Endothelial cell of umbilical vein (primary cell): ENCODE measurements at regions of chr6 and their contacts with region 1.

Region 1: DNA sequence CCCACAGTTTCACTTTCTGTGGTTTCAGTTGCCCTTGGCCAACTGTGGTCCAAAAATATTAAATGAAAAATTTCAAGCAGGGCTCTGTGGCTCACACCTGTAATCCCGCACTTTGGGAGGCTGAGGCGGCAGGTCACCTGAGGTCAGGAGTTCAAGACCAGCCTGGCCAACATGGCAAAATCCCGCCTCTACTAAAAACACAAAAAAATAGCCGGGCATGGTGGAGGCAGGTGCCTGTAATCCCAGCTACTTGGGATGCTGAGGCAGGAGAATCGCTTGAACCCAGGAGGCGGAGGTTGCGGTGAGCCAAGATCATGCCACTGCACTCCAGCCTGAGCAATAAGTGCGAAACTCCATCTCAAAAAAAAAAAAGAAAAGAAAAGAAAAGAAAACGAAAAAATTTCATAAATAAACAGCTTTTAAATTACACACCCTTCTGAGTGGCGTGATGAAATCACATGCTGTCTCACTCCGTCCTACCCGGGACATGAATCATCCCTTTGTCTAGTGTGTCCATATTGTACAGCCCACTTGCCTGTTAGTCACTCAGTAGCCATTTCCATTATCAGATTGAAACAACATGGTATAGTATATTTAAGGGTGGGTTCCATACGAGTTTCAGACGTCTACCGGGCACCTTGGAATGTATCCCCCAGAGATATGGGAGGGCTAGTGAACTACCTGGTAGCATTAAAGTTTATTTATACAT is 11.7 kb downstream of the PTPRK start:
- DNase-seq: peak; percentile 92
- H3K4me3 ChIP-seq: peak overlapping the region in 1 of 3 experiments; percentile 39
- H3K27ac ChIP-seq: peak overlapping the region; percentile 97
- H3K4me1 ChIP-seq: peaks cover 56% of the 10 kb centered on the region
- H3K27me3 ChIP-seq: no peaks in the 10 kb centered on the region
- CTCF ChIP-seq: no peak
- POLR2A ChIP-seq: peak; percentile 66

Region 2: DNA sequence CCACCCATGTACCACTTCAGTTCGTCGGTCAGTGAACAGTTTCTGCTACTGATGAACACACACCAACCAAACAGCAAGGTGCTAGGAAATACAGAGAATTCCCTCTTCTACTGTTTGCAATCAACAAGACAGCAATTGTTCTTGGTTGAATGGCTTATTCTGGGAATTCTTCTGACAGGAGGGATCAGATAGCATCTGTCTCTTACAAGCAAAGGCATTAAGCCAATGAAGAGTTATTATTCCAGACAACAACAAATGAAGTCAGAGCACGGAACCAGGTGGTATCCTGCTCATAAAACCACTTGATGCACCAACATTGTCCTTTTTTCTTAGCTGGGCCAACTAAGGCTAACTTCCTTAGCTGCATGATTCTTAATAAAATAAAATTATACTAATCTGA is 26.1 kb before region 1 on chr6:
- CTCF ChIA-PET with region 1: interaction called, 5 read pairs
- POLR2A ChIA-PET with region 1: no interaction called
- dilution Hi-C with region 1: no loop called
- intact Hi-C with region 1: loop called (anchors 1 kb)
- DNase-seq: peak; percentile 67
- H3K4me3 ChIP-seq: no peak overlapping the region
- H3K27ac ChIP-seq: peak overlapping the region; percentile 32
- H3K4me1 ChIP-seq: peaks cover 33% of the 10 kb centered on the region
- H3K27me3 ChIP-seq: no peaks in the 10 kb centered on the region
- CTCF ChIP-seq: no peak
- POLR2A ChIP-seq: no peak

Region 3: DNA sequence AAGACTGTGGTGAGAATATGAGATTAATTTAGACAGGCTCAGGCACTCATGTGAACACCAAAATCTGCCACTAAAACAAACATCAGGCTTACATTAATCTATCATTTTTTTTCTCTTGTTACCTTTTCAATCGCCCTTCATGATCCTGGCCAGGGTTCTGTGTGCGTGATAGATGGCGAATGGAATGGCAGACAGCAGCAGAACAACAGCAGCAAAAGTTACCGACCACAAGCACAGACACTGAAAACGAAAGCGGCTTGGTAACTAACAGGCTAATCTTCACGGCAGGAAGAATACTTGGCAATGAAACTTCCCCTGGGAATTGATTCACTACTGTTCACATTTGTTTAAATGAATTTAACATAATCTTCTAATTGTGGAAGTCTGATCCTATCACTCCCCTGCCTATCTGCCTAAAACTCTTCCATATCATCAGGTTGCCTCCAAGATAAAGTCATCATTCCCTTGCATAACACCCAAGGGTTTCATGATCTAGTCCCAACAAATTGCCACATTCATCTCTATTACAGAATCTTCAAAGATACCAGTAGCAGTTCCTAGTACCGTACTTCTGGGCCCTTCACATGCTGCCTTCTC is 17.0 kb before region 1 on chr6:
- CTCF ChIA-PET with region 1: interaction called, 5 read pairs
- POLR2A ChIA-PET with region 1: no interaction called
- dilution Hi-C with region 1: no loop called
- intact Hi-C with region 1: loop called (anchors 1 kb)
- DNase-seq: peak; percentile 79
- H3K4me3 ChIP-seq: peak overlapping the region; percentile 18 to 86 (median 51)
- H3K27ac ChIP-seq: peak overlapping the region; percentile 99
- H3K4me1 ChIP-seq: peaks cover 34% of the 10 kb centered on the region
- H3K27me3 ChIP-seq: no peaks in the 10 kb centered on the region
- CTCF ChIP-seq: no peak
- POLR2A ChIP-seq: peak; percentile 5